Head of caudate nucleus (tissue), 42 donors: ENCODE measurements at regions of chr1 and their contacts with region 1.

Region 1: DNA sequence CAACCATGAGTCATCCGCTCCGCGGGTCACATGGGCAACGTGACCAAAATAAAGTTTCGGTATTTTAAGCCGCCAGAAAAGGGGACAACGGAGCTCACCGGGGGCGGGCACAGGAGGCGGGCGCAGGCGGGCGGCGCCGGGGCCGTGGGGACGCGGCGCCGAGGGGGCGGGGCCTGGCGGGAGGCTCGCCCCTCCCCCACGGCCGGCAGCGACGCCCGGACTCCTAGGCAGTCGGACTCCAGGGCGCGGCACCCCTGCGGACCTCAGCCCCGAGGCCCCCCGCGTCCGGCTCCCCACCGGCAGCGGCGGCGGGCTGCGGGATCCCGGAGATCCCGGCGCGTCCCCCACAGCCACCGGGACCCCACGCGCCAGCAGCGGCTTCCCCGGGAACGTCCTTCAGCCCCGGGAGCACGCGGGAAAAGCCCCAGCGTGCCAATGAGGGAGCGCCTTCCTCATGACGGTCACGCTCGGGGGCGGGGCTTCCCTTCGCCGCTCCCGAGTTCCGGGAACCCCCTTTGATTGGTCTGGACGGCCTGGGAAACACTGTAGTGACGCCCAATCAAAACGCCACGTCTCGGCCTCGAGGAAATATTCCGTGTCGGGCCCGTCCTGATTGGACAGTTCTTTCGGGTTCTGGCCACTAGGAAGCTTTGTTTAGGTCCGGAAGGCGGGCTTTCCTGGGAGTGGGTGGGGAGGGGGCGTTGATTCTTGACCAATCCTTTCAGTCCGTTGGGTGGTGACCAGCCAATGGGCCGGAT is 515 bp upstream of the CAMTA1 start:
- DNase-seq: peak; percentile 99 to 100 (median 100)

Region 2: DNA sequence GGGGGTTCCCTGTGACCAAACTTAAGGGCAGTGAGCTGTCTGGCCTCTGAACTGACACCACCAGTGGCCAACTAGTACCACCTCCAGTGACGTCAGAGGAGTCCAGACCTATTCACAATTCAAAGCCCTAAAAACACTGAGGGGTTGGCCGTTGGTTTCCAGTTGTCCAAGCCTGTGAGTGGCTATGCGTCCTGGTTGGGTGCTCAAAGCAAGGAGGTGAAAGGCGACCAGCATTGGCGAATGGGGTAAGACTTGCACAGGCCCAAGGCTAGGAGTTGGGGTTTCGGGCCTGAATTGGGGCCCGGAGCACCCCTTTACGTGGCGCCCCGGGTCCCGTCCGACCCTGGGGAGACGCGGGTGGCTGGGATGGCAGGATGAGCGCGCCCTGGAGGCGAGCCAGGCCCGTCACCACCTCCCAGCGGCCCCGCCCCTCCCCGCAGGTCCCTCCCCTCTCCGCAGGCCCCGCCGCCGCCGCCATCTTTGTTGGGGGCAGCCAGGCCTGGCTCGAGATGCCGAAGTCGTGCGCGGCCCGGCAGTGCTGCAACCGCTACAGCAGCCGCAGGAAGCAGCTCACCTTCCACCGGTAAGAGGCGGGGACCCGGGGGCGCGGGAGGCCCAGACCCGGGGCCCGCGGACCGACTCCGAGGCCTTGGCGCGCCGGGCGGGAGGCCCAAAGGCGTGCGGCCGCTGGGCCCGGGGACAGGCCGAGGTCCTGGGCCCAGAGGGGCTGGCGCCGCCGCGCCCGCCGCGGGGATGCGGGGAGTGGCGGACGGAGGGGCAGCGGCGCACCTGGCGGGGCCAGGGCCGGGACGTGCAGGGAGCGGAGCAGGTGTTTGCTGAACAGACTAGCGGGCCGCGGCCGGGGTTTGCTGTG is 159.8 kb before region 1 on chr1 and contains the start of gene THAP3:
- intact Hi-C with region 1: loop called (anchors 10 kb)
- DNase-seq: peak; percentile 62 to 95 (median 90)

Region 3: GRCh38 chr1:6638226-6638625 is 146.5 kb before region 1 on chr1:
- intact Hi-C with region 1: no loop called
- DNase-seq: peak in 37 of 42 donors; percentile 19 to 78 (median 54)

Region 4: GRCh38 chr1:6701437-6702153 is 83.1 kb before region 1 on chr1 and contains the start of gene DNAJC11:
- intact Hi-C with region 1: loop called (anchors 5 kb)
- DNase-seq: peak; percentile 77 to 97 (median 93)